A549 (cell line): ENCODE measurements at regions of chr19 and their contacts with region 1.

Region 1: GRCh38 chr19:39846176-39846677 is at the start of gene FBL:
- DNase-seq: peak; percentile 96 to 100
- ATAC-seq: peak; percentile 79 to 91
- H3K4me3 ChIP-seq: peak within 1 kb of the TSS; percentile 86
- H3K27ac ChIP-seq: peak within 1 kb of the TSS; percentile 87 to 90
- H3K4me1 ChIP-seq: peaks cover 44% of the 10 kb centered on the region
- CTCF ChIP-seq: no peak; the same call in 2 of the 3 replicates
- EP300 ChIP-seq: no peak
- POLR2A ChIP-seq: peak; percentile 99
- RAD21 ChIP-seq: no peak
- polyA plus RNA-seq, gene FBL: 716 and 970 TPM in 2 replicates

Region 2: DNA sequence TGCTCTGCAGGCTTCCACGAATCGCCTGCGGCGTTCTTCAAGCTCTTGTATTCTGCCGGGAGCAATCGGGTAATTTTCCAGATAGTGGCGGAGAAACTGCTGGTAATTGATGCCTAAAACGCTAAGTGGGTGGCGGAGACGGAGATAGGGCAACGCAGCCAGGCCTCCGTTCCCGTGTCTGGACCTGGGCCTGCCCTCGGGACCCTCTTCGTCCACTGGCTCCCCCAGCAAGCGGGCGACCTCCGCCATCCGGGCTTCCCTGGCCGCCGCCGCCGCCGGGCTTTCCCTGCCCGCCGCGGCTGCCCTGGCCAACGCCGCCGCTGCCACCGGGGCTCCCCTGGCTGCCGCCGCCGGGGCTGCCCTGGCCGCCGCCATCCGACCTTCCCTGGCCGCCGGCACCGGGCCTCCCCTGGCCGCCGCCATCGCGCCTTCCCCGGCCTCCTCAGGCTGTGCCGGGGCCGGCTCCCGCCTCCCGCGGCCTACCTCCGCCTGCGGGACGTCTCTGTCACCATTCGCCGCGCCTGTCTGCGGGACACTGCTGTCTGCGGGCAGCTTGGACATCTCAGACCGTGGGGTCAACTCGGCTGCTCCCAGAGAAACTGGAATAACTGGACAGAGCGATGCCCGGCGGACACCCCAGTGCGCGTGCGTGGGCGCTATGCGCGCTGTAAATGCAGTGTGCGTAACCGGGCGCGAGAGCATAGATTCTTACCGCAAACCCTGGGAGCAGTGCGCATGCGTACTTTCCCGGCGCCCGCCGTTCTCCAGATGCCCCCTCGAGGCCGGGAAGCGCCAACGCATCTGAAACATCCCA is 306.5 kb before region 1 on chr19 and contains the start of gene EID2:
- CTCF ChIA-PET with region 1: interaction called, 17 read pairs
- POLR2A ChIA-PET with region 1: no interaction called
- DNase-seq: peak; percentile 99
- ATAC-seq: peak; percentile 93 to 98
- H3K4me3 ChIP-seq: peak within 1 kb of the TSS; percentile 68
- H3K27ac ChIP-seq: peak within 1 kb of the TSS; percentile 88 to 89
- H3K4me1 ChIP-seq: peaks cover 15% of the 10 kb centered on the region
- CTCF ChIP-seq: peak; percentile 90
- EP300 ChIP-seq: no peak
- POLR2A ChIP-seq: peak; percentile 98
- RAD21 ChIP-seq: peak; percentile 71 to 72
- polyA plus RNA-seq, gene EID2: 23.2 and 26.1 TPM in 2 replicates

Region 3: DNA sequence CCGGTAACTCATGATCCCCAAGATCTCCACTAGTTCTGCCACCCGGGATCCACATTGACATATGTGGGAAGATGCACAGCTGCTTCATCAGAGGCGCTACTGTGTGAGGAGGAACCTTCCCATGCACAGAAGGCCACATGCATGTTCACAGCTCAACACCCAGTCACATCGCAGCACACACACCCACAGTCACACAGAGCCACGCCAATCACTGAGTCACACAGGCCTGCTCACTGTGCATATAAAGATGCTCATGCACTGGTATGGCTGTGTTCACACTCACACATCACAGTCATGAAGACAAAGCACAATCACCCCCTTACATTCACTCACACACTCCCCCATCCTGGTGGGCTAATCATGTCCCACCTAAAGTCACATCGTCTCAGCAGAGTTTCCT is 118.2 kb before region 1 on chr19:
- CTCF ChIA-PET with region 1: no interaction called
- POLR2A ChIA-PET with region 1: no interaction called
- DNase-seq: no peak
- ATAC-seq: peak in 1 of 2 experiments; percentile 49; a peak in 2 of 6 replicates
- H3K4me3 ChIP-seq: no peak overlapping the region
- H3K27ac ChIP-seq: no peak overlapping the region
- H3K4me1 ChIP-seq: no peaks in the 10 kb centered on the region
- CTCF ChIP-seq: no peak
- EP300 ChIP-seq: no peak
- POLR2A ChIP-seq: peak; percentile 8; the same call in 1 of the 2 replicates
- RAD21 ChIP-seq: no peak

Region 4: GRCh38 chr19:39765091-39766076 is 80.8 kb before region 1 on chr19:
- CTCF ChIA-PET with region 1: interaction called, 60 read pairs
- POLR2A ChIA-PET with region 1: interaction called, 9 read pairs
- DNase-seq: peak; percentile 41 to 82
- ATAC-seq: peak; percentile 55 to 77; a peak in 3 of 6 replicates
- H3K4me3 ChIP-seq: no peak overlapping the region
- H3K27ac ChIP-seq: no peak overlapping the region
- H3K4me1 ChIP-seq: no peaks in the 10 kb centered on the region
- CTCF ChIP-seq: peak; percentile 94
- EP300 ChIP-seq: no peak
- POLR2A ChIP-seq: no peak
- RAD21 ChIP-seq: peak; percentile 39 to 63; a peak in 3 of 5 replicates

Region 5: DNA sequence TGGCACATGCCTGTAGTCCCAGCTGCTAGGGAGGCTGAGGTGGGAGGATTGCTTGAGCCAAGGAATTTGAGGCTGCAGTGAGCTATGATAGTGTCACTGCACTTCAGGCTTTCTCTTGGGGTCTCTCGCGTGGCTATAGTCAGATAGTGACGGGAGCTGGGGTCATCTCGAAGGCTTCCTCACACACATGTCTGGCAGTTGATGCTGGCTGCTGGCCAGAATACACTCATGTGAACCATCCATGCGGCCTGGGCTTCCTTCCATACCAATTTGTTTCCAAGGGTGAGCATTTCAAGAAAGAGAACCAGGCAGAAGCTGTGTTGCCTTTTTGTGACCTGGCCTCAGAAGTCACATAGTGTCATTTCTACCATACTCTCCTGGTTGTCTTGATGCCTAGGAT is 41.1 kb before region 1 on chr19:
- CTCF ChIA-PET with region 1: interaction called, 34 read pairs
- POLR2A ChIA-PET with region 1: interaction called, 3 read pairs
- DNase-seq: no peak
- ATAC-seq: no peak
- H3K4me3 ChIP-seq: no peak overlapping the region
- H3K27ac ChIP-seq: no peak overlapping the region
- H3K4me1 ChIP-seq: no peaks in the 10 kb centered on the region
- CTCF ChIP-seq: no peak
- EP300 ChIP-seq: no peak
- POLR2A ChIP-seq: no peak
- RAD21 ChIP-seq: no peak

Region 6: GRCh38 chr19:39833464-39834286 is 12.6 kb before region 1 on chr19 and contains the start of gene DYRK1B:
- CTCF ChIA-PET with region 1: interaction called, 43 read pairs
- POLR2A ChIA-PET with region 1: interaction called, 97 read pairs
- DNase-seq: peak; percentile 100
- ATAC-seq: peak; percentile 90 to 95
- H3K4me3 ChIP-seq: peak within 1 kb of the TSS; percentile 73
- H3K27ac ChIP-seq: peak within 1 kb of the TSS; percentile 81 to 87
- H3K4me1 ChIP-seq: peaks cover 17% of the 10 kb centered on the region
- CTCF ChIP-seq: no peak
- EP300 ChIP-seq: no peak; a peak in 1 of 5 replicates
- POLR2A ChIP-seq: peak; percentile 40
- RAD21 ChIP-seq: no peak
- polyA plus RNA-seq, gene DYRK1B: 13.8 and 17.3 TPM in 2 replicates

Region 7: GRCh38 chr19:39906820-39907611 is 60.8 kb after region 1 on chr19:
- CTCF ChIA-PET with region 1: interaction called, 10 read pairs
- POLR2A ChIA-PET with region 1: no interaction called
- DNase-seq: peak in 1 of 2 experiments; percentile 54
- ATAC-seq: no peak
- H3K4me3 ChIP-seq: no peak overlapping the region
- H3K27ac ChIP-seq: peak overlapping the region; percentile 75 to 86; a peak in 5 of 6 replicates
- H3K4me1 ChIP-seq: peaks cover 28% of the 10 kb centered on the region
- CTCF ChIP-seq: no peak; the same call in 2 of the 3 replicates
- EP300 ChIP-seq: no peak
- POLR2A ChIP-seq: no peak
- RAD21 ChIP-seq: no peak